Right ventricle myocardium superior (tissue), 1 donor: ENCODE measurements at regions of chr10 and their contacts with region 1.

Region 1: DNA sequence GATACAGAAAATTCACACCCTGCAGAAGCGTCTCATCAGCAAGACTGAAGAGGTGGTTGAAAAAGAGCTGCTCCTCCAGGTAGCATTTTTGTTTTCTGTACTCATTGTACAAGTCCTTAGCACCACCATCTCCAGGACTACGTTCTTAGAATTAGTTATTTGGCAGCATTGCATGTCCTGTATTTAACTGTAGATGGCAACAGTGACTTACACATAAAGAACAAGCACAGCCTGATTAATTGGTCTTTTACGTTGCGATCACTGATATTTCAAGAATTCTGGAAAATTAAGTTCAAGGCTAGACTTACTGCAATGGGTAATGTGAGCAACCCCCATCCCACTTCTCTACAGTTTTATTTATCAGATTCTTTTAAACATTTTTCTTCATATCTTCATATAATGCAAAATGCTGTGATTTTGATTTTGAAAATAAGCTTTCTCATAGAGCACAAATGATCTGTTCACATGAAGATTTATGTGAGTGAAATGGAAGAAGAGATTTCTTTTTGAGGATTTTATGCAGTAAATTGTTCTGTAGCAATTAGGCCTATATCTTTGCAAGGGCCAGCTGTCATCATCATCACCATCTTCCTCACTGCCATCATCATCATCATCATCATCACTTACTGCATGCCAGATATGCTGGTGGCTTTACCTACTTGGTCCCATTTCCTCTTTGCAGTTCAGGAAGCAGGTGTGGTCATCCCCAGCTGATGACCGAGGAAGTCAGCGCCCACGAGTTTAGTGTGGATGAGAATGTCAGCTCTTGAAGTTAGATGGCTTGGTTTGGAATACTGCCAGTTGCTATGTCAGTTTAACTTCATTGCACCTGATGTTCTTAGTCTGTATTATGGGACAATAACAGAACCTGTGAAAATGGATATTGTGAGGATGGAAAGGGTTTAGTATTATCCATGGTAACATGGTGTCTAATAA is 53.4 kb downstream of the CFAP58 start:
- DNase-seq: no peak
- ATAC-seq: peak; percentile 51

Region 2: DNA sequence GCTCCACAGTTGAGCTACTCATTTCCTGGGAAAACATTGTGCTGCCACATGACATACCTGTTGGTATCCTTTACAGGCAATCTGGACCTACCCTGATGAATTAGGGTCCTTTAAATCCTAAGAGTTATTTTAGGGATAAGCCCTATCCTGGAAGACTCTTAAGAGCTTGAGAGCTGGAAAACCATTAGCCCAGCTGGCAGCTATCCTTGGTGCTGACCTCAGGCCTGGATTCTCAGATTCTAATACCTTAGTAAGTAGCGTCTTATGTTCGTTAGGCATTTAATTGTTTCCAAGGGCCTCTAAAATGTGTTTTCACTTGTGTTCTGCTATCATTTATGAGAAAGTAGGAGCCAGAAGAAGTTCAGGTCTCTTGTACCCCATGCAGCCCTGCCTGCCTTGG is 141.1 kb after region 1 on chr10:
- intact Hi-C with region 1: no loop called
- DNase-seq: no peak
- ATAC-seq: no peak

Region 3: DNA sequence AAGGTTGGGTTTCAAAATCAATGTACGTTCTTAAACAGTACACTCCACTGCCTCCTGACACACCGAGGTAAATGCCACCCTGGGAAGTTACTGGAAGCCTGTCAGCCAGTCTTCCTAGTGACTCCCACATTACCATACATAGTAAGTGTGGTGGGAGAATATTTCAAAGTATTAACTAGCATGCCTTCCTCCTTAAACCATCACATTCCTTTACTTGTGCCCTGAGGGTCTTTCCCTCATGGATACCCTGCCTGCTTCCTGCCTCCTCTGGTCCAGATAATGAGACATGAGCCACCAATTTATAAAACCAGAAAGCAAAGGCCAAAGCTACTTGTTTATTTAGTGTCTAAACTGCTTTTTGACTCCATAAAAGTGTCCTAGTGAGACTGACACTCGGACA is 210.9 kb after region 1 on chr10:
- intact Hi-C with region 1: loop called (anchors 5 kb)
- DNase-seq: no peak
- ATAC-seq: no peak